Activated naive CD4-positive, alpha-beta T cell treated with anti-CD3 and anti-CD28 coated beads for 36 hours (primary cell): ENCODE measurements at regions of chr7 and their contacts with region 1.

Region 1: DNA sequence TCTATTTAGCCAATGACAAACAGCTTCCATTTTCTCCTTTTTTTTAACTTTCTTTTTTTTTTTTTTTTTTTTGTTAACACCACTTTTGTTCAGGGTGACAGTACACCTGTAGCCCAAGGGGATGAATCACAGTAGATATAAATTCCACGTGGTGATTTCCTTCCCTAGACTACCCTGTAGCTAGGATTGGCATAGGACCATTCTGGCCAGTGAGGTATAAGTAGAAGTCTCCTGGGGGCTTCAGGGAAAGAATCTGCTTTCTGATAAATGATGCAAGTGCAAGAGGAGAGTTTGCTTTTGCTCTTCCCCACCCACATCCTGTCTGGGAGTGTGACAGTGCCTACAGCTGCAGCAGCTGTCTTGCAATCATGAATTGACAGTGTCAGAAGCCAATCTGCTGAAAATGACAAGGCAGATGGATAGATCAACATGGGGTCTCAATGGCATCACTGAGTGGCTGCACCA is 63.2 kb upstream of the TOMM7 start:
- DNase-seq: peak; percentile 88
- H3K4me3 Mint-ChIP-seq: peak overlapping the region; percentile 64
- H3K27ac Mint-ChIP-seq: peak overlapping the region; percentile 98
- H3K4me1 Mint-ChIP-seq: peaks cover 54% of the 10 kb centered on the region
- H3K27me3 Mint-ChIP-seq: no peaks in the 10 kb centered on the region

Region 2: GRCh38 chr7:21945454-21946227 is 940.2 kb before region 1 on chr7 and contains the start of gene CDCA7L:
- CTCF ChIA-PET with region 1: no interaction called
- intact Hi-C with region 1: loop called (anchors 10 kb)
- DNase-seq: peak; percentile 85
- H3K4me3 Mint-ChIP-seq: peak within 1 kb of the TSS; percentile 86
- H3K27ac Mint-ChIP-seq: peak within 1 kb of the TSS; percentile 84
- H3K4me1 Mint-ChIP-seq: peaks cover 63% of the 10 kb centered on the region
- H3K27me3 Mint-ChIP-seq: no peaks in the 10 kb centered on the region
- total RNA-seq, gene CDCA7L: 101 to 103 TPM

Region 3: DNA sequence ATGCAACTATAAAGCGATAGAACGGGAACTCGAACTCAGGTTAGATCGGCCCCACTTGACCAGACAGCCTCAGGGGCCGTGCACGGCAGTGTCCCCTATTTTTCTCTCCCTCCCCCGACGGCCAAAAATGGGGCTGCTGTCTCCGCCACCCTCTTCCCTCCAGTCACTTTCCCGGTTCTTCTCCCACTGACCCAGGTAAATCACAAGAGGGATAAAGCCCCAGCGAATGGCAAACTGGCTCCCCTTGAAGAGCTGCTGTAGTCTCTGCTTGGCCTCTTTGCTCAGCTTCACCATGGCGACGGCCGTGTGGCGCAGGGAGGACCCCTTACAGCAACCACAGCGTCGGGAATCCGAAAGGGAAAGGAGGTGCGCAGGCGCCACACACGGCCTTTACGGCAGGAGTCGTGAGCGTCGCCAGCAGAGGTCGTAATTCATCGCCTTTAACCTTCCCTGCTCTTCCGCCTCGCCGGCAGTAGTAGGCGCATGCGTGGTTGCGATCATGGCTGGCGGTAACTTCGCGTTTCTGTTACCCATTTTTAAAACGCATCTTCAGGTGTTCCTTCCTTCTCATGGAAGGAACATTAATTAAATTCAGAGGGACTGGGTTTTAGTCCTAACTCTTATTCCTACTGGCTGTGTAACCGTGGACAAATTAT is 63.2 kb before region 1 on chr7 and contains the start of gene TOMM7:
- CTCF ChIA-PET with region 1: interaction called, 4 read pairs
- intact Hi-C with region 1: loop called (anchors 1 kb)
- DNase-seq: peak; percentile 92
- H3K4me3 Mint-ChIP-seq: peak within 1 kb of the TSS; percentile 99
- H3K27ac Mint-ChIP-seq: peak within 1 kb of the TSS; percentile 96
- H3K4me1 Mint-ChIP-seq: peaks cover 36% of the 10 kb centered on the region
- H3K27me3 Mint-ChIP-seq: peaks cover 10% of the 10 kb centered on the region
- total RNA-seq, gene TOMM7: 269 to 297 TPM

Region 4: GRCh38 chr7:22992874-22993840 is 107.3 kb after region 1 on chr7:
- CTCF ChIA-PET with region 1: no interaction called
- intact Hi-C with region 1: loop called (anchors 1 kb)
- DNase-seq: peak; percentile 67
- H3K4me3 Mint-ChIP-seq: no peak overlapping the region
- H3K27ac Mint-ChIP-seq: no peak overlapping the region
- H3K4me1 Mint-ChIP-seq: peaks cover 32% of the 10 kb centered on the region
- H3K27me3 Mint-ChIP-seq: no peaks in the 10 kb centered on the region

Region 5: DNA sequence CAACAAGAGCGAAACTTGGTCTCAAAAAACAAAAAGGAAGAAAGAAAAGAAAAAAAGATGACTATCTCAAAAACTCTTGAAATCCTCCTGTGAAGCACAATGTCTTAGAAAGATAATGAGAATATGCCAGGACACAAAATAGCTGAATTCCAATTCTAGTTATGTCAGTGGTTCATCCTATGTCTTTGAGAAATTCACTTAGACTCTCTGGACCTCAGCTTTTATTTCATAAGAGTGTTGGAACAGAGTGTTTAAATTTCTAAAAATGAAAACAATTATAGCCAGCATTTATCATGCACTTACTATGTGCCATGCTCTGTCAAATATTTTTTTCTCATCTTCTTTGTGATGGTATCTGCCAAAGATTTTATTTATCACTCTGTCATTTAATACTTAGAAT is 141.4 kb after region 1 on chr7:
- CTCF ChIA-PET with region 1: no interaction called
- intact Hi-C with region 1: no loop called
- DNase-seq: no peak
- H3K4me3 Mint-ChIP-seq: no peak overlapping the region
- H3K27ac Mint-ChIP-seq: no peak overlapping the region
- H3K4me1 Mint-ChIP-seq: peaks cover 3% of the 10 kb centered on the region
- H3K27me3 Mint-ChIP-seq: peaks cover 10% of the 10 kb centered on the region

Region 6: DNA sequence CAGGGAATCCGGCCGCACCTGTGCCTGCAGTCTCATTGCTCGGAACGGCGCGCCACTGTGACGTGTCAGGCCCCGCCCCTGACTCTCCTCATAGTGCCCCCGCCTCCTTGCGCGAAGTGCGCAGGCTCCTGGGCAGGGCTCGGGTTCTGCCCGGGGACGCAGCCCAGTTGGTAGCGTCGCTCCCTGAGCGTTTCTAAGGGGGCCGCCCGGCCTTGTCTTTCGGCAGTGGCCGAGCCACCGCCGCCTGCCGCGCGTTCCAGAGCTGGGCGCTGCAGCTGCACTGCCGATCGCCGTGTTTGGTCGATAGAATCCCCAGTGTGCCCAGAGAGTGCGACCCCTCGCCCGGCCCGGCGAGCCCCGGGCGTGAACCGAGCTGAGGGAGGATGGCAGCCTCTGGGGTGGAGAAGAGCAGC is 219.8 kb after region 1 on chr7 and contains the start of gene KLHL7:
- CTCF ChIA-PET with region 1: no interaction called
- intact Hi-C with region 1: loop called (anchors 1 kb)
- DNase-seq: peak; percentile 98
- H3K4me3 Mint-ChIP-seq: peak within 1 kb of the TSS; percentile 93
- H3K27ac Mint-ChIP-seq: peak within 1 kb of the TSS; percentile 89
- H3K4me1 Mint-ChIP-seq: peaks cover 35% of the 10 kb centered on the region
- H3K27me3 Mint-ChIP-seq: no peaks in the 10 kb centered on the region
- total RNA-seq, gene KLHL7: 24.0 to 26.4 TPM

Region 7: GRCh38 chr7:23546897-23547572 is 661.2 kb after region 1 on chr7:
- CTCF ChIA-PET with region 1: no interaction called
- intact Hi-C with region 1: no loop called
- DNase-seq: peak; percentile 86
- H3K4me3 Mint-ChIP-seq: no peak overlapping the region
- H3K27ac Mint-ChIP-seq: no peak overlapping the region
- H3K4me1 Mint-ChIP-seq: peaks cover 5% of the 10 kb centered on the region
- H3K27me3 Mint-ChIP-seq: no peaks in the 10 kb centered on the region